RWPE1 (cell line): ENCODE measurements at regions of chr1 and their contacts with region 1.

Region 1: GRCh38 chr1:9110669-9111356 is 18.1 kb downstream of the GPR157 start:
- DNase-seq: peak; percentile 92
- H3K27ac ChIP-seq: peak overlapping the region; percentile 69
- CTCF ChIP-seq: peak; percentile 89

Region 2: DNA sequence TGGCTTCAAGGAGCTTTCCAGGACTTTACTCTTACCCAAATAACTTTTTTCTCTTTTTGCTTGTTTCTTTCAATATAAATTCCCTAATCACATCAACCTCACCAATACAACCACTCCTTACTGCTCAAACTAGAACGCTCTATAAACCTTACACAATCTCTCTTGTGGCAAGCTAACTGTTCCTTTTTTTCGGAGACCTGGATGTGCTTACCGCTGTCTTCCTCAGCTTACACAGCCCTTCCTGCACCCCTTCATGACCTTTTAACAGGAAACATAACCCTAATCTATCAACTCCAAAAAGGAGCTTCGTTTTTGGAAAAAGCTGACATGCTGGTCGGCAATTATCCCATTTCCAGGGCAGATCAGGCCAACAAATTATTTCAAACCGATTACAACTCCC is 17.2 kb before region 1 on chr1:
- CTCF ChIA-PET with region 1: no interaction called
- POLR2A ChIA-PET with region 1: no interaction called
- DNase-seq: no peak
- H3K27ac ChIP-seq: no peak overlapping the region
- CTCF ChIP-seq: no peak

Region 3: DNA sequence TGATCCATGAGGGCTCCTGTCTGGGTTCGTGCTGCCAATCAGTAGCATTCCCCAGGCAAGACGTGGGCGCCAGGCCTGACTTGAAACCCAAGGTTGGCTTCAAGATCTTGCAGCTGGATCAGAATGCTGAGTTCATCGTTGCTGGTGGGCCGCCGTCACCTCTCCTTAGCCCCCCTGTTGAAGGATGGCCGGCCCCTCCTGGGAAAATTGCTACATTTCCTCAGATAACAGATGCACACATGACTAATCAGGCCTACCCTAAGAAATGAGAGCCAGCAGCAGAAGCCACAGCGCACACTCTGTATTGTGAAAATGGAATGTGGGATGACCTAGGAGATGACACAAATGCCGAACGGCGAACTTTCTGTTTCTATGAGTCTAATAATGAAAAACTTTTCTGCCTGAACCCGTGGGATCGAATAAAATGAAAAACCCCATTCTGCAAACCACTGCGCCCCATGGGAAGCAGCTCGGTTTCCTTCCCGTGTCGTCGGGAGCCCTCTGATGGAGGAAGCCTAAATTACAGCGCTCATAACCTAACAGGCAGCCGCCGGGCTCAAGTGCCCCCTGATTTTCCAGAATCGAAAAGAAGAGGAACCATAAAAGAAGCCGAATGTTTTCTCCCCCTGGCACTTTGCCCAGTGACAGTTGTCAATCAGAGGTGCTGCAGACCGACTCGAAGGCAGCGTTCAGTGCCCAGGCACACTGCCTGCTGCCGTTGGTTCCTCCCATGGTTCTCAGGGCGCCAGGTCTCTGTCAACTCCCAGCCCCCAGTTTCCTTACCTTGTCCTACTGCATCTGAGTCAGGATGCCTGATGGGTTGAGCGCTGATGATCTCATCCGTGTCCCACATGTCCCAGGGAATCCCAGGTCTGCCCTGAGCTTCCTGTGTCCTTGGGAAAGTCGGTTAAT is 85.6 kb after region 1 on chr1:
- CTCF ChIA-PET with region 1: interaction called, 22 read pairs
- POLR2A ChIA-PET with region 1: interaction called, 8 read pairs
- DNase-seq: no peak
- H3K27ac ChIP-seq: peak overlapping the region; percentile 54
- CTCF ChIP-seq: peak; percentile 82

Region 4: GRCh38 chr1:9201401-9202239 is 90.8 kb after region 1 on chr1:
- CTCF ChIA-PET with region 1: interaction called, 22 read pairs
- POLR2A ChIA-PET with region 1: no interaction called
- DNase-seq: no peak
- H3K27ac ChIP-seq: no peak overlapping the region
- CTCF ChIP-seq: no peak